ENCODE measurements at regions of chr1 and their contacts with region 1.

Region 1: DNA sequence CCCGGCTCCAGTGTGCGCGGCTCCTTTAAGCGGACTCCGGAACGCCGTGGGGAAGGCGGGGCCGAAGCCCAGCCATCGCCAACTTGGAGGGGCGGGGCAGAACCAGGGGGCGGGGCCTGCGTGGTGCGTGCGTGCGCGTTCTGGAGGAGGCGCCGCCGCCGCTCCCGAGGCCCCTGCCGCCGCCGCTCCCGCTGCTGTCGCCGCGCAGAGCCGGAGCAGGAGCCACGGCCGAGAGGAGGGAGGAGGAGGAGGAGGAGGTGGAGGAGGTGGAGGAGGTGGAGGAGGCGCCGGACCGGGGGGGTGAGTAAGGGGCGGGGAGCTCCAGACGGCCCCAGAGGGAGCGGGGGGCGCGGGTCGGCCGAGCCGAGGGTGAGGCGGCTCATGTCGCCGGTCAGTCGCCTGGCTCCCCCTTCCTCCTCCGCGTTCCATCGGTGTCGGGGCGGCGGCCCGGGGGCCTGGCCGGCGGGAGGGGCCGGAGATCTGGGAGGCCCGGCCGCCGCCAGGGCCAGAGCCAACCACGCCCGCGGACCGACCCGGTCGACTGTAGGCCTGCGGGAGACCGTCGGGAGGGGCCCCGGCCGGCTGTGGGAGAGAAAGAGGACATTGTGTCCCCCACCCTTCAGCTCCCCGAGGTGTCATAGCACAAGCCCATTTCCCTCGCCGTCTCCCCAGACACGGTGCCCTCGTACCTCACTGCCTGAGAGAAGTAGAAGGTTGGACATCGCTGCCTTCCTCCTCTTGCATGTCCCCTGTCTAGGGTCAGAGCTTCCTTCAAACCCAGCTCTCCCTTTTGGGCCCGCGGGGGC is at the start of gene RAP1A:
- DNase-seq: peak; percentile 84 to 98 (median 96)

Region 2: DNA sequence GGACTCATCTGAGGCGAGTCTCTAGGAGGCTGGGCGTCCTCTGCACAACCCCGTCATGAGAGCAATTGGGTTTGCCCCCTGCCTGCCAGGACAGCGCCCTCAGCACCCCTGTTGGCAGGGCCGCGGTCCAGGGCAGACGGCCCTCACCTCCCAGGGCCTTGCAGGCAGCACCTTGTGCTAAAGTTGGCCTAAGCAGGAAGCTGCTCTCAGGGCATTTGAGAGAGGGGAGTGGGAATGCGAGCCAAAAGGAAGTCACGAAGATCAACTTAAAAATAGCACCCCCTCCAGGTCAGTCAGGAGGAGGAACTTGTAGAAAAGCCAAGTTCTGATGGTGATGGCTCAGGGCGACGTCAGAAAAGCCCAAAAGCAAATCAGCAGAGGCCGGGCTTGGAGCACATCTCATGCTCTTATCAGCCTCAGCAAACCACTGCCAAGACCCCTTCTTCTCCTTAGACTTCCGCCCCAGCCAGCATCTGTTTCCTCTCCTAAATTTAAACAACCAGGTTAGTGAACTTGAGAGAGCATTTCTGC is 103.8 kb before region 1 on chr1:
- intact Hi-C with region 1: loop called (anchors 10 kb)
- DNase-seq: peak in 26 of 42 donors; percentile 17 to 73 (median 44)